BJ (cell line): ENCODE measurements at regions of chr14 and their contacts with region 1.

Region 1: GRCh38 chr14:24710403-24711112 is 76.6 kb upstream of the GZMB start:
- DNase-seq: no peak
- H3K4me3 ChIP-seq: no peak overlapping the region
- H3K27me3 ChIP-seq: no peaks in the 10 kb centered on the region
- CTCF ChIP-seq: peak; percentile 92

Region 2: DNA sequence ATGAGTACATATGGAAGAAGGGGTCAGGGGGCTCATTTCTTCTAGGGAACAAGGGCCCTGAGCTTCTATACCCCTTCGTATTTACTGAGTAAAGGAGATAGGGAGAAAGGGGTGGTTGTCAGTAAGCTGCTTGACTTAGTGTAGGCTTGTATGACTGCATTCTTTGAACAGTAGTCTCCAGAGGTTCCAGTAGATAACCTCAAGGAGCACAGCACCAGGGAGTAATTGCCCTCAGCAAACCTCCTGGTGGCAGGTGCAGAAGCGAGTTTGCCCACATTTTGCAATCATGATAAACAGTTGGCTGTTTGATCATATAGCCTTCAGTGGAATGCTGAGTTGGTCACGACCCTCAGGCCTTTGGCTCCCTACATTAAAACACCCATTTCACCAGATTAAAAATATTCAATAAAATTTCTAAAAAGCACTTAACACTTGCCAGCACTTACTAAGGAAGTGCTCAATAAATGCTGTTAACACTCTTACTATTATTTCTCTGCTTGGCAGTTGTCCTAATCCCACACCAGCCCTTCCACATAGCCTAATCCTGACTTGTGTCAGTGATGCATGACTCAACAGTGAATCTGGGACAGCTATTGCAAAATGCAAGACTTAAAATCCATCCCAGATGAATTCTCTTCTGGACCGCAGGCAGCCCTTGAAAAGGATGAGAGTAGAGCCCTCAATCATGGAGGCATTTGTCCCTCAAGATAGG is 725.5 kb before region 1 on chr14:
- CTCF ChIA-PET with region 1: no interaction called
- POLR2A ChIA-PET with region 1: no interaction called
- DNase-seq: peak; percentile 76
- H3K4me3 ChIP-seq: no peak overlapping the region
- H3K27me3 ChIP-seq: no peaks in the 10 kb centered on the region
- CTCF ChIP-seq: no peak

Region 3: GRCh38 chr14:24629521-24629920 is 81.0 kb before region 1 on chr14:
- CTCF ChIA-PET with region 1: no interaction called
- POLR2A ChIA-PET with region 1: no interaction called
- DNase-seq: no peak
- H3K4me3 ChIP-seq: no peak overlapping the region
- H3K27me3 ChIP-seq: no peaks in the 10 kb centered on the region
- CTCF ChIP-seq: no peak

Region 4: DNA sequence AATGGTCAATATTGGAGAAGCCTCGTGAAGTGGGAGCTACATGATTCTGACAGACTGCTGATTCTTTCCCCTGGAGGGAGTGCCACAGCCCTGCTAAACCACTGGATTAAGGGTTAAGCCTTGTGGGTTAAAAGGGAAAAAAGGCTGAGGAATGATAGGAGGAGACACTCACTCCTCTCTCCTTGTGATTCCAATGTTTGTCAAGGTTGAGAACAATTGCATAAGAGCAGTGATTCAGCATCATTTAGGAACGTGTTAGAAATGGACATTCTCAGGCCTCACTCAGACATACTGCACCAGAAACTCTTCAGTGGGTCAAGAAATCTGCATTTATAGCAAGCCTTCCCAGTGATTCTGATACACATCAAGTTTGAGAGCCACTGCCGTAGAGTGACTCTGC is 11.2 kb after region 1 on chr14:
- CTCF ChIA-PET with region 1: interaction called, 16 read pairs
- POLR2A ChIA-PET with region 1: no interaction called
- DNase-seq: no peak
- H3K4me3 ChIP-seq: no peak overlapping the region
- H3K27me3 ChIP-seq: no peaks in the 10 kb centered on the region
- CTCF ChIP-seq: no peak

Region 5: DNA sequence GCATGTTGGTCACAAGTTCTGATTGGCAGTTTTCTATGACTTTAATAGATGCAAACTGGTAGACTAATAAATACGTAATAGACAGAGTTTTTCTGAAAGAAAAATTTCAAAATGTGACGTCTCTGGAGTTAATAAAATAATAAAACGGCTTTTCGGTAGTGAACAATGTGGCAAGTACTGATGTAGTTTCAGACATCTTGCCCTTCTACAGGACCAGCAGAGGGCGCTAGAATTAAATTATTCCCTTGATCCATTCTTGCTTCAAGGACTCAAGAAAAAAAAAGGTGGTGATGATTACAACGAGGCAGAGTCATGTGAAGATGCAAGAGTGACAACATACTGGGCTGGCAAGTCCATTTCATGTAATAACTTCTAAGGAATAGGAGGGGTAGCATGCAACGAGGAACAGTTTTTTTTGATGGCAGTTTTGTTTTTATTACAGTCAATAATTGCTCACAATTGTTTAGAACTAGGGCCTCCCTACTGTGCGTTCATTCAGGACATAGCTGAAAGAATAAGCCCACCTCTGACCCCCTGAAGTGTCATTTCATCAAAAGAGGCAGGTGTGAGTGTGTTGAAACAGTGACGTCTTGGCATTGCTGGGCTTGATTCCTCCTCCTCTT is 24.4 kb after region 1 on chr14:
- CTCF ChIA-PET with region 1: interaction called, 10 read pairs
- POLR2A ChIA-PET with region 1: no interaction called
- DNase-seq: peak; percentile 6
- H3K4me3 ChIP-seq: no peak overlapping the region
- H3K27me3 ChIP-seq: no peaks in the 10 kb centered on the region
- CTCF ChIP-seq: peak; percentile 67

Region 6: GRCh38 chr14:25237845-25238244 is 527.3 kb after region 1 on chr14:
- CTCF ChIA-PET with region 1: interaction called, 13 read pairs
- POLR2A ChIA-PET with region 1: no interaction called
- DNase-seq: no peak
- H3K4me3 ChIP-seq: no peak overlapping the region
- H3K27me3 ChIP-seq: no peaks in the 10 kb centered on the region
- CTCF ChIP-seq: peak; percentile 27; the same call in 1 of the 2 replicates

Region 7: GRCh38 chr14:25400607-25401206 is 690.1 kb after region 1 on chr14:
- CTCF ChIA-PET with region 1: interaction called, 45 read pairs
- POLR2A ChIA-PET with region 1: no interaction called
- DNase-seq: peak; percentile 2
- H3K4me3 ChIP-seq: no peak overlapping the region
- H3K27me3 ChIP-seq: no peaks in the 10 kb centered on the region
- CTCF ChIP-seq: peak; percentile 77